Activated T-helper 2 cell treated with anti-CD3 and anti-CD28 coated beads, Interferon-gamma antibody, Interleukin-2, Interleukin-4, amounts not matched to agents 10 μg/mL and 5 μg/mL and 100 μg/mL, durations not matched to agents 14 hours and 24 hours and 36 hours (primary cell): ENCODE measurements at regions of chr12 and their contacts with region 1.

Region 1: DNA sequence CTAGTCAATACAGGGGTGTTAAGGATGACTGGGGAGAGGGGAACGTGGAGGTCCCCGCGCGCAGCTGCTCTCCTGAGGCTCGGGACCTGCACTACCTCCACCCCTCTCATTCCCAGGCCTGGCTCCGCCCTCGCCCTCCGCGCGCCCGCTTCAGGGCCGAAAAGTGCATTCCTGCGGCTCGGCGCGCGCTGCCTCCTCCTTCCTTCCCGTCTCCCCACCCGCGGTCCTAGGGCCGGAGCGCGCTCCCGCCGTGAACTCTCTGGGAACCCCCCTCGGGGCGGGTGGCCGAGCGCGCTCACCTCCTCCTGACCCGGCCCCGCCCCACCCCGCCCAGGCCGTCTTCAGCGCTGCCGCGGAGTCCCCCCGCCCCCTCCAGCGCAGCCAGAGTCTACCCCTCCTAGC is 11.2 kb downstream of the RARG start:
- DNase-seq: peak; percentile 84
- H3K4me3 Mint-ChIP-seq: peak overlapping the region; percentile 96
- H3K27ac Mint-ChIP-seq: peak overlapping the region; percentile 99
- H3K4me1 Mint-ChIP-seq: peaks cover 71% of the 10 kb centered on the region
- H3K27me3 Mint-ChIP-seq: no peaks in the 10 kb centered on the region

Region 2: DNA sequence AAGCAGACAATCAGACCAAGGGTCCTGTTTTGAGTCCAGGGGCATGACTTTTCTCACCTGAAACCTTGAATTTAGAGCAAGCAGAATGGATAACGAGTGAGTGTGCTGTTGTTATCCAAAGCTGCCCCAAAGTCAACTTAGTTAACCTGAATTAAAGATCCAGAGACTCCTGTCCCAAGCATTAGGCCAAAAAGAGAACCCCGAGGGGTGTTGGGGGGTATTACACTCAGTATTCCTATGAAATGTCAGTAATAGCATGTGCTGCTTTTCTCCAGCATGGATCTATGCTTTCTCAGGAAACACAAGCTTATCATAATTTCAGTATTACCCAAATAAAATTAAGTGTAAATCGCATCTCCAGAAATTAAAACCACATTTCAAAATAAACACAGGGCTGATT is 195.6 kb before region 1 on chr12:
- intact Hi-C with region 1: no loop called
- DNase-seq: no peak
- H3K4me3 Mint-ChIP-seq: no peak overlapping the region
- H3K27ac Mint-ChIP-seq: no peak overlapping the region
- H3K4me1 Mint-ChIP-seq: peaks cover 3% of the 10 kb centered on the region
- H3K27me3 Mint-ChIP-seq: no peaks in the 10 kb centered on the region

Region 3: DNA sequence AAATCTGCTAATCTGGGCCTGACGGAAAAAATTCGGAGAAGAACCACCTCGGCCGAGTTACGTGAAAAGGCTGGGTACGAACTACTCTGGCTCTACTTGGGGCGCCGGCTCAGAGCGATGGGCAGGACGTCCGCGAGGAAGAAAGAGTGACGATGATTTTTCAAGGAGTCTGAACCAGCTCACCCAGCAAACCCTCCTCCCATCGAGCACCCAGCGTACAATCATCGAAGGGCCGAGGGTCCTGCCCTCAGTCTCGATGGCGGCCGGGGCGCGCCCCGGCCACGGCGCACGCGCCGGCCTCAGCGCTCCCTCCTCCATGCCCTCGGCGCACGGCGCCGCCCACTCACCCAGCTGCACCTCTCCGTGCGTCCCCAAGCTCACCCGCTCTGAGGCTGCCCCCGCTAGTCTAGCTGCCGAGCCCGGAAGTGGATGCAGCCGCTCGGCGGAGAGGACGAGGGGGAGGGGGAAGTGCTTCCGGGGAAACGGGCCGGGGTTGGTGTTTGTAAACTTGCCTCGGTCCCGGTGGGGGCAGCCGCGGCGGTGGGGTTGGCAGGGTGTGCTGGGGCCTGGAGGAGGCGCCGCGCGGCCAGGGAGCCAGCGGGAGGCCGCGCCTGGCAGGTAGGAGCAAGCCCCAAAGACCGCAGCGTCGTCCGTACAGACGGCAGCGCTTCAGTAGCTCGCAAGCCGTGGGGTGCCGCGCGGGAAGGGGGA is 40.4 kb before region 1 on chr12 and contains the starts of genes CSAD and ZNF740:
- intact Hi-C with region 1: loop called (anchors 1 kb)
- DNase-seq: peak; percentile 97
- H3K4me3 Mint-ChIP-seq: peak within 1 kb of the TSS; percentile 91
- H3K27ac Mint-ChIP-seq: peak within 1 kb of the TSS; percentile 94
- H3K4me1 Mint-ChIP-seq: peaks cover 40% of the 10 kb centered on the region
- H3K27me3 Mint-ChIP-seq: no peaks in the 10 kb centered on the region
- total RNA-seq, gene CSAD: 20.2 TPM in 2 replicates
- total RNA-seq, gene ZNF740: 44.9 and 45.5 TPM in 2 replicates

Region 4: DNA sequence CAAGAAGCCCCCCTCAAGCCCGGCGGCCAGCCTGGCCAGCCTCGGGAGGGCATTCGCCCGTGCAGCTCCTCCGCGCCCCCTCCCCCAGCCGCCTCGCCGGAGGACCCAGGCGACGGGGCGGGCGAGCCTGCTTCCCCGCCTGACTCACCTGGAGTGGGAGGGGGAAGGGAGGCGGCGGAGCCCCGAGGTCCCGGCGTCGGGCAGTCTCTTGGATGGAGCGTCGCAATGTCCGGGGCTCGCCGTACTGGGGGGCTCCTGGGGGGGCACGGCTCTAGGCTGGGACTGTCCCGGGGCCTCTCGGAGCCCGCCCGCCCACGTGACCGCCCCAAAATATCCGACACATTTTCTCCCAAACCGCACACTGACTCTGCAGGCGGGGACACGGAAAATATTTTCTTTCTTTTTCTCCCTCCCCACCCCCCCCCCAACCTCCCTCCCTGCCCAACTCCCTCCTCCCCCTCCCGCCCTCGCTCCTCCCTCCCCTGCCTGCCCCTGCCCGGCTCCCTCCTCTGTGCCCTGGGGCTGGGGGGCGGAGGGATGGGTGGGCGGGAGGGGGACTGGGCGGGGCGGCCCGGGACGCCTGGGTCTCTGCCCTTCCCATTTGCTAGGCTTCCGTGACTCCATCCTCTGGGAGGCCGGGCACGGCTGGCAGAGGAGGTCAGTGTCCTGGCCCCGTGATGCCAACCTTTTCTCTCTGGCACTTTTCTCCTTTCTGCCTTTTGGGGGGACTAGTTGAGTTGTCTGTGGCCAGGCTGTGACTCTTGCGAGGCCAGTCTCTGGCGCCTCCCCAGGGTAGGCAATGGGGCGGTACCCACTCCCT is 11.2 kb after region 1 on chr12 and contains the start of gene RARG:
- intact Hi-C with region 1: loop called (anchors 1 kb)
- DNase-seq: peak; percentile 39
- H3K4me3 Mint-ChIP-seq: peak within 1 kb of the TSS; percentile 78
- H3K27ac Mint-ChIP-seq: peak within 1 kb of the TSS; percentile 79
- H3K4me1 Mint-ChIP-seq: peaks cover 38% of the 10 kb centered on the region
- H3K27me3 Mint-ChIP-seq: no peaks in the 10 kb centered on the region
- total RNA-seq, gene RARG: 38.5 and 40.1 TPM in 2 replicates

Region 5: DNA sequence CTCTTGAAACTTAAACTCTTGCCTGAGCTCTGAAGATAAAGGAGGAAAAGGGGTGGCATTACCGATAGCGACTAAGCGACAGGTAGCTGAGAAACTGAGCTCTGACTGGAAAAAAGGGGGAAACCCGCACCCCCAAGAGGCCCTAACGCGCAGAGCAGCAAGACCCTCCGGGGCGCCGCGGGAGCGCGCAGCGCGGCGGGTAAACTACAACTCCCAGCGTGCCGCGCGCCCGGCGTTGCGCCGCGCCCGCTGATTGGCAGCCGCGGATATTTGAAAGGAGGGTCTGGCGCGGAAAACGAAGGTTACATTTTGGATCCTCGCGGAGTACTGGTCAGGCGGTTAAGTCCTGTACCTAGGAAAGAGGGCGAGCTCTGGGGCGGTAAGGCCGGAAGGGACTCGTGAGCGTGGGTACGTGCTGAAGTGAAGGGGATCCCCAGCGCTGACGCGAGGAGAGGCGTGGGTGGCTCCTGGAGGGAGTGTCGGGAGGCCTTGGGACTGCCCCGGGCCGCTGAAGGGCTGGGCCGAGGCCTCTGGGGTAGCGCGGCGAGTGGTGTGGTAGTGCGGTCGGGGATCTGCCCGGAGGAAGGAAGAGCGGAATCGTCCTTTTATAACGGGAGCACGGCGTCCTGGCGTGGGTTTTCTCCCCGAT is 47.3 kb after region 1 on chr12 and contains the start of gene ESPL1:
- intact Hi-C with region 1: loop called (anchors 1 kb)
- DNase-seq: peak; percentile 79
- H3K4me3 Mint-ChIP-seq: peak within 1 kb of the TSS; percentile 92
- H3K27ac Mint-ChIP-seq: peak within 1 kb of the TSS; percentile 91
- H3K4me1 Mint-ChIP-seq: peaks cover 34% of the 10 kb centered on the region
- H3K27me3 Mint-ChIP-seq: no peaks in the 10 kb centered on the region
- total RNA-seq, gene ESPL1: 72.6 and 75.3 TPM in 2 replicates

Region 6: GRCh38 chr12:53379389-53380103 is 158.7 kb after region 1 on chr12:
- intact Hi-C with region 1: loop called (anchors 1 kb)
- DNase-seq: peak; percentile 98
- H3K4me3 Mint-ChIP-seq: no peak overlapping the region
- H3K27ac Mint-ChIP-seq: no peak overlapping the region
- H3K4me1 Mint-ChIP-seq: peaks cover 35% of the 10 kb centered on the region
- H3K27me3 Mint-ChIP-seq: no peaks in the 10 kb centered on the region